ENCODE measurements at regions of chr16 and their contacts with region 1.

Region 1: DNA sequence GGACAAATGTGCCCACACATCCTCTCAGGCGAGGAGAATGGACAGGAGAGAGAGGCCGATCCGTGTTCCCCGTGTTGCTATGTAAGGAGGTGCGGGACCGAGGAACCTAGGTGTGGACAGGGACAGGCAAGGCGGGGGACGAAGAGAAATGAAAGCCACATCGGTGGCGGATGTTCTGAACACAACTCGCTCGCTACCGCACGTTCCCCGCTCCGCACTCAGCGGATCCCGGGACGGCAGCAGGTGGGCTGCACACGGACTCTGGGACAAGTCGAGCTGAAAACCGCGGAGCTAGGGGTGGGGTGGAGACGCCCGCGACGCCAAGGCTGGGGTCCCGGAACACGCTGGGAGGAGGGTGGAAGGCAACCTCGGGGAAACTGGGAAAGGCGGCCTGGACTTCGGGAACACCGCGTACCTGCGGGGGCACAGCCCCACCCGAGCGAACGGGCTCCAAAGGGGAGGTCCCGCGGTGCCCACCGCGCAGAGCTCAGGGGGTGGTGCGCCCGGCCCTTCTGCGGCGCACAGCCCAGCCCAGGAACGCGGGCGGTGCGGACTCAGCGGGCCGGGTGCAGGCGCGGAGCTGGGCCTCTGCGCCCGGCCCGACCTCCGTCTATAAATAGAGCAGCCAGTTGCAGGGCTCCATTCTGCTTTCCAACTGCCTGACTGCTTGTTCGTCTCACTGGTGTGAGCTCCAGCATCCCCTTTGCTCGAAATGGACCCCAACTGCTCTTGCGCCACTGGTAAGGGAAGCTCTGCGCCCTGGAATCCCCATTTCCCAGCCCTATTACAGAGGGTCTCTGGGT is at the start of gene MT1E:
- DNase-seq: peak; percentile 67
- ATAC-seq: peak; percentile 77
- H3K4me3 Mint-ChIP-seq: peak within 1 kb of the TSS; percentile 77
- H3K27ac Mint-ChIP-seq: no peak within 1 kb of the TSS
- H3K4me1 Mint-ChIP-seq: peaks cover 49% of the 10 kb centered on the region
- H3K27me3 Mint-ChIP-seq: peaks cover 98% of the 10 kb centered on the region
- CTCF ChIP-seq: no peak
- total RNA-seq, gene MT1E: 92.7 to 114 TPM (median 103 TPM) in 3 replicates

Region 2: DNA sequence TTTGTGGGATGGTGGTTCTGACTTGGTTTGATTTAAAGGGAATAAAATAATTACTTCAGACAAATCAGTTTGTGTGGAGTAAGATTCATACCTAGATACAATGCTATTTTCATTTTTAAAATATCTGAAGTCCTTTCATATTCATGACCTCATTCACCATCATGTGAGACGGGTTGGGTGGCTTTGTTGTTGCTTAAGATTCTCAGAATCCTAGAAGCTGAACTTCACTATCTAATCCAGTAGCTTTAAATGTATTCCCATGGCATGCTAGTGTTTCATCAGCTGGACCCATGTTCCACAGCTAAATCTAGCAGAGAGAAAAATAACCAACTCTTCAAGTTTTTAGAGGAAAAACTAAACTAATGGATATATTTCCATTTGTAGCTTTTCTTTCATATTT is 197.2 kb before region 1 on chr16:
- CTCF ChIA-PET with region 1: no interaction called
- POLR2A ChIA-PET with region 1: no interaction called
- DNase-seq: no peak
- ATAC-seq: no peak
- H3K4me3 Mint-ChIP-seq: no peak overlapping the region
- H3K27ac Mint-ChIP-seq: no peak overlapping the region
- H3K4me1 Mint-ChIP-seq: peaks cover 17% of the 10 kb centered on the region
- H3K27me3 Mint-ChIP-seq: peaks cover 12% of the 10 kb centered on the region
- CTCF ChIP-seq: no peak

Region 3: DNA sequence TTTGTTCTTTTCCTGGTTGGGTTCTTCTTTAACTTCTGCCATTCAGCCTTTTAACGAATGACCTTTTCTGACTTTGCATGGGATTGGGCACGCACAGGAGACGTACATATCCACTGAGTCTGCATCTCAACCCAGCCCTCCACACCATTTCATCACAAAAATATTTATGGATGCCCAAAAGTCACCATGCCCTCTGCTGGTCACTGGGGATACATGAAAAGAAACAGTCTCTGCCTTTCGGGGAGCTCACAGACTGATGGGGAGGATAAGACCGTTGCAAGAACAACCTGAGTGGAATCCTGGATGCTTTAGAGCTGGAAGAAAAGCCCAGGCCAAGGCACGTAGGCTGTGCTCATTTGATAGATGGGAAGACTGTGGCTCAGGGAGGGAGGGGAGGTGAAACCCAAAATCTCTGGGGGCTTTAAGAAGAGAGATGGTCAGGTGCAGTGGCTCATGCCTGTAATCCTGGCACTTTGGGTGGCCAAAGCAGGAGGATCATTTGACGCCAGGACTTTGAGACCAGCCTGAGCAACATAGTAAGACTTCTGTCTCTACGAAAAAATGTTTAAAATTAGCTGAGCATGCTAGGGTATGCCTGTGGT is 24.8 kb before region 1 on chr16:
- CTCF ChIA-PET with region 1: interaction called, 10 read pairs
- POLR2A ChIA-PET with region 1: interaction called, 6 read pairs
- DNase-seq: peak; percentile 31
- ATAC-seq: peak; percentile 73
- H3K4me3 Mint-ChIP-seq: no peak overlapping the region
- H3K27ac Mint-ChIP-seq: no peak overlapping the region
- H3K4me1 Mint-ChIP-seq: no peaks in the 10 kb centered on the region; the same call in 1 of the 2 replicates
- H3K27me3 Mint-ChIP-seq: peaks cover 22% of the 10 kb centered on the region
- CTCF ChIP-seq: 0 out of 2 replicates have a peak, but pooled peaks have one; percentile 24

Region 4: DNA sequence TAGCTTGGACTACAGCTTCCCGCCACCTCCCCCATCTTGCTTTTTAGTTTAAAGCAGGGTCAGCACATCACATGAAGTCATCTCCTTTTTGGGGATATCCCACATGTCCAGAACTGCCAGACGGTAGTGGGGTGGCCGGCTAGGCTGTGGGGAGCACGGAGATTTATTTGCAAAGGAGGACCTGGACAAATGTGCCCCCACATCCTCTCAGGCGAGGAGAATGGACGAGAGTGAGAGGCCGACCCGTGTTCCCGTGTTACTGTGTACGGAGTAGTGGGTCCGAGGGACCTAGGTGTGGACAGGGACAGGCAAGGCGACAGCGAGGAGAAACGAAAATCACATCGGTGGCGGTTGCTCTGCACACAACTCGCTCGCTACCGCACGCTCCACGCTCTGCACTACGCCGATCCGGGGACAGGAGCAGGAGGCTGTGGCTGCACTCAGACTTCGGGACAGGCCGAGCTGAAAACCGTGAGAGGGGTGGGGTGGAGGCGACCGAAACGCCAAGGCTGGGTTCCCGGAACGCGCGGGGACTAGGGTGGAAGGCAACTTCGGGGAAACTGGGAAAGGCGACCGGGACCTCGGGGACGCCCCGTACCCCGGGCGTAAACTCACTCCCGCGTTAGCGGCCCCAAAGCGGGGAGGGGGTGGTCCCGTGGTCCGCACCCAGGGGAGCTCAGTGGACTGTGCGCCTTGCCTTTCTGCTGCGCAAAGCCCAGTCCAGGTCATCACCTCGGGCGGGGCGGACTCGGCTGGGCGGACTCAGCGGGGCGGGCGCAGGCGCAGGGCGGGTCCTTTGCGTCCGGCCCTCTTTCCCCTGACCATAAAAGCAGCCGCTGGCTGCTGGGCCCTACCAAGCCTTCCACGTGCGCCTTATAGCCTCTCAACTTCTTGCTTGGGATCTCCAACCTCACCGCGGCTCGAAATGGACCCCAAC is 12.7 kb after region 1 on chr16 and contains the start of gene MT1A:
- CTCF ChIA-PET with region 1: interaction called, 6 read pairs
- POLR2A ChIA-PET with region 1: interaction called, 24 read pairs
- DNase-seq: peak; percentile 74
- ATAC-seq: peak; percentile 49
- H3K4me3 Mint-ChIP-seq: peak within 1 kb of the TSS; percentile 69
- H3K27ac Mint-ChIP-seq: no peak within 1 kb of the TSS
- H3K4me1 Mint-ChIP-seq: peaks cover 28% of the 10 kb centered on the region
- H3K27me3 Mint-ChIP-seq: peaks cover 100% of the 10 kb centered on the region
- CTCF ChIP-seq: no peak
- total RNA-seq, gene MT1A: 0.94 to 2.8 TPM in 2 of 3 replicates, not detected in the other

Region 5: GRCh38 chr16:56667581-56668571 is 42.5 kb after region 1 on chr16 and contains the start of gene MT1G:
- CTCF ChIA-PET with region 1: interaction called, 4 read pairs
- POLR2A ChIA-PET with region 1: interaction called, 46 read pairs
- DNase-seq: peak; percentile 65
- ATAC-seq: peak; percentile 60
- H3K4me3 Mint-ChIP-seq: peak within 1 kb of the TSS; percentile 74
- H3K27ac Mint-ChIP-seq: no peak within 1 kb of the TSS
- H3K4me1 Mint-ChIP-seq: peaks cover 44% of the 10 kb centered on the region
- H3K27me3 Mint-ChIP-seq: peaks cover 100% of the 10 kb centered on the region
- CTCF ChIP-seq: no peak
- total RNA-seq, gene MT1G: 326 to 361 TPM (median 333 TPM) in 3 replicates

Region 6: DNA sequence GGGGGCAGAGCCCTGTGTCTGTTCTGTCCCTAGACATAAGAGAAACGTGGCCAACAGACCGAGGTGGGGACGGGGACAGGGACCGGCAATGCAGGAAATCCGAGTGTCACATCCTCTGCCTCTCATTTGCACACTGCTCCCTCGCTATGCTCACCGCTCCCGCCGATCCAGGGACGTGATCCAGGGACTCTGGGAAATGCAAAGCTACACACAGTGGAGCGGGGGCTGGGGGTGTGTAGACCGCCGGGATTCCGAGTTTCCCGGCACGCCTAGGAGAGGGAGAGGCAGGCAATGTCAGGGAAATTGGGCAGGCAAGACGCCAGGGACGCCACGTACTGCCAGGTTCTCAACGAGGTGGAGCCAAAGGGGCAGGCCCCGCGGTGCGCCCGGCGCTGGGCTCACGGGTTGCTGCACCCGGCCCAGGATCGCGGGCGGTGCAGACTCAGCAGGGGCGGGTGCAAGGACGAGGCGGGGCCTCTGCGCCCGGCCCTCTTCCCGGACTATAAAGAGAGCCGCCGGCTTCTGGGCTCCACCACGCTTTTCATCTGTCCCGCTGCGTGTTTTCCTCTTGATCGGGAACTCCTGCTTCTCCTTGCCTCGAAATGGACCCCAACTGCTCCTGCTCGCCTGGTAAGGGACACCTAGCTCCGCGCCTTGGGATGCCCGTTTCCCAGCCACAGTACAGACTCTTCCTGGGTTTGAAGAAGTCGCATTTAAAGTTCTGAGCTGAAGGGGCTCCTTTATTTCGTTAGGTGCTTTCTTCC is 56.8 kb after region 1 on chr16 and contains the start of gene MT1X:
- CTCF ChIA-PET with region 1: no interaction called
- POLR2A ChIA-PET with region 1: interaction called, 27 read pairs
- DNase-seq: peak; percentile 85
- ATAC-seq: peak; percentile 89
- H3K4me3 Mint-ChIP-seq: peak within 1 kb of the TSS; percentile 88
- H3K27ac Mint-ChIP-seq: peak within 1 kb of the TSS; percentile 75
- H3K4me1 Mint-ChIP-seq: peaks cover 42% of the 10 kb centered on the region
- H3K27me3 Mint-ChIP-seq: peaks cover 17% of the 10 kb centered on the region
- CTCF ChIP-seq: no peak
- total RNA-seq, gene MT1X: 328 to 466 TPM (median 465 TPM) in 3 replicates

Region 7: GRCh38 chr16:56841233-56841632 is 215.9 kb after region 1 on chr16:
- CTCF ChIA-PET with region 1: no interaction called
- POLR2A ChIA-PET with region 1: no interaction called
- DNase-seq: no peak
- ATAC-seq: no peak
- H3K4me3 Mint-ChIP-seq: no peak overlapping the region
- H3K27ac Mint-ChIP-seq: 0 out of 2 replicates have a peak overlapping the region, but pooled peaks have one; percentile 45
- H3K4me1 Mint-ChIP-seq: no peaks in the 10 kb centered on the region
- H3K27me3 Mint-ChIP-seq: no peaks in the 10 kb centered on the region
- CTCF ChIP-seq: no peak

Measured in WTC11 (cell line).